Activated CD4-positive, alpha-beta memory T cell treated with anti-CD3 and anti-CD28 coated beads, Interleukin-2, amount 10 ng/mL, durations not matched to agents 7 days and 5 days (primary cell): ENCODE measurements at regions of chr3 and their contacts with region 1.

Region 1: GRCh38 chr3:192816351-192816750 is 89.0 kb upstream of the FGF12 start:
- DNase-seq: no peak
- H3K4me3 Mint-ChIP-seq: no peak overlapping the region
- H3K27ac Mint-ChIP-seq: peak overlapping the region; percentile 33
- H3K4me1 Mint-ChIP-seq: peaks cover 53% of the 10 kb centered on the region
- H3K27me3 Mint-ChIP-seq: peaks cover 1% of the 10 kb centered on the region

Region 2: DNA sequence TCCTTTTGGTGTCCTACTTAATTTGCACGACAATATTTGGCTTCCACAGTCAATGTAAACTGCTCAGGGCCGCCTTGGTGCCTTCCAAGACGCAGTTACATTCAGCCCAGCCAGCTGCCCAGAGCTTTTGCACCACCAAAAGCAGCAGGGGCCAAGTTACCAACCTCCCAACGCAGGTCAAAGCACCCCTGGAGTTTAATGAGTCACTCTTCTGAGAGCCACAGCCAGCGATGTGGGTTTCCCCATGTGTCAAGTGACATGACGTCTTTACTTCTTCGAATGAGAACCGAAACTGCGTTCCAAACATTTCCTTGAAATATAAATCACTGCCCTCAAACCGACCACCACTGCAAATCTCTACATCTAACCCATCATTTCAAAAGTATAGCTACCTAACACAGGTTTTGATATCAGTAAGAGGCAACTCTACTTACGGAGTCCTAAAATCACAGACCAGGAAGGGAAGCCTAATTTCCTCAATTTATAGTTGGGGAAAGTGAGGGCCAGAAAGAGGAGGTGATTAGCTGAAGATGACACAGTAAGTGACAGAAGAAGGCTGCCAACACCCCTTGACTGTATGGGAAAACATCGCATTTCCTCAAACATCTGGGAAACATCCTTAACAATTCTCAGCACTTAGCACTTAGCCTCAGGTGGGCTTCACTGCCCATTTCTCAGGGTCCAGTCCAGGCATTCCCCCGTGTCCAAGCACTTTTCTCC is 76.8 kb after region 1 on chr3:
- CTCF ChIA-PET with region 1: interaction called, 10 read pairs
- POLR2A ChIA-PET with region 1: interaction called, 36 read pairs
- DNase-seq: peak; percentile 86
- H3K4me3 Mint-ChIP-seq: peak overlapping the region; percentile 33
- H3K27ac Mint-ChIP-seq: peak overlapping the region; percentile 96
- H3K4me1 Mint-ChIP-seq: peaks cover 96% of the 10 kb centered on the region
- H3K27me3 Mint-ChIP-seq: peaks cover 2% of the 10 kb centered on the region

Region 3: GRCh38 chr3:192899540-192899982 is 83.2 kb after region 1 on chr3:
- CTCF ChIA-PET with region 1: interaction called, 10 read pairs
- POLR2A ChIA-PET with region 1: interaction called, 36 read pairs
- DNase-seq: no peak
- H3K4me3 Mint-ChIP-seq: no peak overlapping the region
- H3K27ac Mint-ChIP-seq: peak overlapping the region; percentile 97
- H3K4me1 Mint-ChIP-seq: peaks cover 78% of the 10 kb centered on the region
- H3K27me3 Mint-ChIP-seq: peaks cover 2% of the 10 kb centered on the region

Region 4: DNA sequence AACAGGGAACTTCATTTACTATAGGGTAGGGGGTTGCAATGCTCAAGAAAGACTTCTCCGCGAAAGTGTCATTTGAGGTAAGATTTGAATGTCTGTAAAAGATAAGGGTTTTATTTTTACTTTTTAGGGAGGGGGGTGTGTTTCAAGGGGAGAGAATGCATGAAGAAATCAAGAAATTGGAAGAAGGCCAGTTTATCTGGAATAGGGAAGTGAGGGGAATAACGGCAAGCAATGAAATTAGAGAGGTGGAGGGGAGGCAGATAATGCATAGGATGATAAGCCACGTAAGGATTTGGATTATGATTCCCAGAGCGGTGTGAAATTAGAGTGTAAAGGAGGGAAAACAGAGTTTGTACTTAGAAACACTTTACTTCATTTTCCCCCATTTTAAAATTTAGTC is 164.3 kb after region 1 on chr3:
- CTCF ChIA-PET with region 1: no interaction called
- POLR2A ChIA-PET with region 1: no interaction called
- DNase-seq: no peak
- H3K4me3 Mint-ChIP-seq: no peak overlapping the region
- H3K27ac Mint-ChIP-seq: no peak overlapping the region
- H3K4me1 Mint-ChIP-seq: no peaks in the 10 kb centered on the region
- H3K27me3 Mint-ChIP-seq: peaks cover 11% of the 10 kb centered on the region

Region 5: GRCh38 chr3:193040836-193041672 is 224.7 kb after region 1 on chr3:
- CTCF ChIA-PET with region 1: interaction called, 198 read pairs
- POLR2A ChIA-PET with region 1: interaction called, 4 read pairs
- DNase-seq: no peak
- H3K4me3 Mint-ChIP-seq: no peak overlapping the region
- H3K27ac Mint-ChIP-seq: no peak overlapping the region
- H3K4me1 Mint-ChIP-seq: peaks cover 4% of the 10 kb centered on the region
- H3K27me3 Mint-ChIP-seq: no peaks in the 10 kb centered on the region

Region 6: DNA sequence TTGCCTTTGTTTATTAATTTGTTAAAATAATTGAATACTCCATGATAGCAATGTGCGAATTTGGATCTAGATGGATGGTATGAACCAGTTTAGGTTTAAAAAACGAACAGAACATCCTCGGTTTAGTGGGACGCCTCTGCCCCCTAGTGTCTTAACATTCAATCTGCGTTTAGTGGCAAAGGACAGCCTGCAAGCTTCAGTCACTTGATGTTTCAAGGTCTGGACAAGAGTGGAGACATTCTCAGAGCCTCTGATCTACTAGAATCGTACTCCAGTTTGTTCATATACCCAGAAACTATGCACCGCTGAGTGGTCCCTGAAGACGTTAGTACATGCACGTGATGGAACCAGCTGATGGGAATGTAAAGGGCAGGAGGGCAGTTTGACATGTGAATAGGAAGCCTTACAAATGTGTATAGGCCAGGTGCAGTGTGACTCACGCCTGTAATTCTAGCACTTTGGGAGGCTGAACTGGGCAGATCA is 756.1 kb after region 1 on chr3:
- CTCF ChIA-PET with region 1: interaction called, 10 read pairs
- POLR2A ChIA-PET with region 1: no interaction called
- DNase-seq: peak; percentile 54
- H3K4me3 Mint-ChIP-seq: no peak overlapping the region
- H3K27ac Mint-ChIP-seq: no peak overlapping the region
- H3K4me1 Mint-ChIP-seq: peaks cover 3% of the 10 kb centered on the region
- H3K27me3 Mint-ChIP-seq: no peaks in the 10 kb centered on the region